Gastrocnemius medialis (tissue), 4 donors: ENCODE measurements at regions of chr7 and their contacts with region 1.

Region 1: GRCh38 chr7:151304856-151305255 is 36.8 kb upstream of the NUB1 start:
- DNase-seq: no peak
- ATAC-seq: no peak
- H3K4me3 ChIP-seq: peak overlapping the region in 1 of 4 donors; percentile 21
- H3K27ac ChIP-seq: no peak overlapping the region
- H3K4me1 ChIP-seq: peaks cover 0 to 4% of the 10 kb centered on the region in 2 donors
- H3K27me3 ChIP-seq: peaks cover 10 to 16% (median 15%) of the 10 kb centered on the region in 3 donors
- CTCF ChIP-seq: no peak
- POLR2A ChIP-seq: no peak

Region 2: GRCh38 chr7:150898475-150899011 is 406.3 kb before region 1 on chr7:
- in situ Hi-C with region 1: no loop called
- intact Hi-C with region 1: loop called (anchors 10 kb)
- DNase-seq: peak; percentile 44 to 45
- ATAC-seq: peak; percentile 58 to 84
- H3K4me3 ChIP-seq: no peak overlapping the region
- H3K27ac ChIP-seq: no peak overlapping the region
- H3K4me1 ChIP-seq: peaks cover 0 to 5% of the 10 kb centered on the region in 2 donors
- H3K27me3 ChIP-seq: peaks cover 0 to 13% (median 6%) of the 10 kb centered on the region in 3 donors
- CTCF ChIP-seq: peak; percentile 78 to 94 (median 85)
- POLR2A ChIP-seq: no peak

Region 3: GRCh38 chr7:151123822-151124464 is 180.9 kb before region 1 on chr7:
- in situ Hi-C with region 1: no loop called
- intact Hi-C with region 1: loop called (anchors 1 kb)
- DNase-seq: peak; percentile 66 to 75
- ATAC-seq: peak; percentile 84 to 94
- H3K4me3 ChIP-seq: no peak overlapping the region
- H3K27ac ChIP-seq: no peak overlapping the region
- H3K4me1 ChIP-seq: peaks cover 4 to 22% of the 10 kb centered on the region in 2 donors
- H3K27me3 ChIP-seq: no peaks in the 10 kb centered on the region
- CTCF ChIP-seq: peak; percentile 85 to 98 (median 95)
- POLR2A ChIP-seq: no peak

Region 4: DNA sequence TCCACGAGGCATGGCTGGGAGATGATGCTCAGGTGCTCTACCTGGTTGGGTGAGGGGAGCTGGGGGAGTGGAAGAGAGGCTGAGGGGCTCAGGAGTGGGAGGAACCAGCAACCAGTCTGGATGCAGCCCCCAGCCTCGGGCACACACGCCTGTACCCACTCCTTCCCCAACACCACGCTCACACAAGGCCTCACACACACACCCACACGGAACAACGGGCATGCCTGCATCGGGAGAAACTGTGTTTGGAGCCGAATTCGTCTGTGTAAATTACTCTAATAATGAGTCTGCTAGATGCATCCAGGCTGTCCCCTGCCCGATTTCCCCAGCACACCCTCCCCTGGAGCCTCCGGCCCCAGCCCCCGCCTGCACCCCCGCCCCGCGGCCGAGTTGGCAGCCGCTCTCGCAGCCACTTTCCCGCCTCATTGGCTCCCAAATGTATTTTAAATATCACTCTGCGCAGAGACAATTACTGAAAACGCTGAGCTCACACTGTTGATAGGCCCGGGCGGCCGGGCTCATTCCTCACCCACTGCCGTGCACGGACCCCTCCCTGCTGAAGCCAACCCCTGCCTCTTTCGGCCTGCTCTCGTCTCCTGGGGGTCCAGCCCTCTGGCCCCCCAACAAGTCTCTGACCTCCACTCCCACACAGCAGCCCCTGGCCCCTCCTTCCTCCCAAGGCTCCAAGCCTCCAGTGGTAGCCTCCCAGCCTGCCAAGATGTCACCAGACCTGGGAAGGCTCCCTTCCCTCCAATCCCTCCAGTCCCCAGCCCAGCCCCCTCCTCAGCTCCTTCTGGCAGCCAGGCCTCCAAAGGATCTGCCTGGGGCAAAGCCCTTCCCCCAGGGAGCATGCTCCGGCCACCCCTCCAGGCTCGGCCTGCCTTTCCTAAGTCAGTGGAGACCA is 105.7 kb before region 1 on chr7:
- in situ Hi-C with region 1: no loop called
- intact Hi-C with region 1: loop called (anchors 10 kb)
- DNase-seq: no peak
- ATAC-seq: no peak
- H3K4me3 ChIP-seq: no peak overlapping the region
- H3K27ac ChIP-seq: no peak overlapping the region
- H3K4me1 ChIP-seq: no peaks in the 10 kb centered on the region
- H3K27me3 ChIP-seq: peaks cover under 1 to 23% (median 6%) of the 10 kb centered on the region in 3 donors
- CTCF ChIP-seq: no peak
- POLR2A ChIP-seq: no peak

Region 5: DNA sequence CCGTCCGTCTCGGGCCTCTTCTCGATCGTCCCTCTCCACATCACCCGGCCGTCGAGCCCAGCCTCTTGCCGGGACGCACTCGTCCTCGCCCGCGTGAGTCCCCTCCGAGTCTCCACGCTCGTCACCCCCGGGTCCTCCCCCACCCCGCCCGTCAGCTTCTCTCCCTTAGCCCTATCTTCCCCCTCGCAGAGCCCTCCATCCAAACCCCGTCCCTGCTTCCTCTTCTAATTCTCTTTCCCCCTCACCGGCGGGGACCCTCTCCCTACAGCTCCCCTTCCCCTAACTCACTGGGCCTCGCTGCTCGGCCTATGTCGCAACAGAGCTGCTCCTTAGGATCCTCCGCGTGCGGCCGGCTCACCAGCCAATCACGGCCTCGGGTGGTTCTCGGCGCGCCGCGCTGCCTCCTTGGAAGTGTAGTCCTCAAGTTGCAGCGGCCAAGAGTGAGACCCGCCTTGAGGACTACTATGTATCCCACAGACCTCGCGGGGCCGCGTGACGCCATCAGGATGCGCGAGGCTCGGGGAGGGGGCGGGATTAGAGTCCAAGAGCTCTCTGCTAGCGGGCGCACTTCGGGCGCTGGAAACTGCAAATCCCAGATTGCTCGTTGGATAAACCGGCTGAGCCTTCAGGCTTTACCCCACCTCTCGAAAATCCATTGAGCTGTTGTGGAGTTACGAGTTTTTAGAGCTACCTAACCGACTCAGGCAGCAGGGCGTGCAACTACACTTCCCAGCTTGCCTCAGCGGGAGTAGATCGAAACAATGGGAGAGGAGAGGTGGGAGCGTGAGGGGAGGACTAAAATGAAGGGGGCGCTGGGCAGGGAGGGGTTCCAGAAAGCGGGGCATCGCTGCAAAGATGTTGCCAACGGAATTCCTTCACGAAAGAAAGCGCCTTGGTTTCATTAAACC is 77.7 kb before region 1 on chr7 and contains the start of gene ABCF2:
- in situ Hi-C with region 1: no loop called
- intact Hi-C with region 1: no loop called
- DNase-seq: peak; percentile 97 to 99
- ATAC-seq: peak; percentile 97
- H3K4me3 ChIP-seq: peak within 1 kb of the TSS; percentile 70 to 90 (median 82)
- H3K27ac ChIP-seq: peak within 1 kb of the TSS; percentile 83 to 91 (median 85)
- H3K4me1 ChIP-seq: peaks cover 27 to 32% of the 10 kb centered on the region in 2 donors
- H3K27me3 ChIP-seq: no peaks in the 10 kb centered on the region
- CTCF ChIP-seq: no peak
- POLR2A ChIP-seq: peak; percentile 74 to 83
- total RNA-seq, gene ABCF2: 73.3 to 119 (median 96.3) TPM

Region 6: DNA sequence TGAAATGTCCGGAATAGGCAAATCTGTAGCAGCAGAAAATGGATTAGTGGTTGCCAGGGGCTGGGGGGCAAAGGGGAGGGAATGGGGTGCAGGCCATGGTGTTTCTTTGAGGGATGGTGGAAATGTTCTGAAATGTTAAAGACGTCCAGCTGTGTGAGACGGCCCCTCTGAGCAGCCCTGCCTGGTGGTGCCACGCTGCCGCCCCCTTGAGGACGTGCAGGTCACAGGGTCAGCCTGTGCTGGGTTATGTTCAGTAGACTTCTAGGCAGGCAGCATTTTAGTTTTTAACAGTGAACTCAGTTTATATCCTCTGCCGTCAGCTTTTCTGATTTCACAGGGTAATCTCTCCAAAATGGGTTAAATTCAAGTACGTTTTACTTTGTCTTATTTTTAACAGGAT is 46.2 kb after region 1 on chr7:
- in situ Hi-C with region 1: loop called in 1 of 4 experiments (anchors 5 kb)
- intact Hi-C with region 1: no loop called
- DNase-seq: no peak
- ATAC-seq: no peak
- H3K4me3 ChIP-seq: no peak overlapping the region
- H3K27ac ChIP-seq: no peak overlapping the region
- H3K4me1 ChIP-seq: peaks cover 4 to 14% of the 10 kb centered on the region in 2 donors
- H3K27me3 ChIP-seq: no peaks in the 10 kb centered on the region
- CTCF ChIP-seq: no peak
- POLR2A ChIP-seq: no peak